Activated B cell treated with CpG ODN at 0.5 μM for 24 hours (primary cell): ENCODE measurements at regions of chr11 and their contacts with region 1.

Region 1: DNA sequence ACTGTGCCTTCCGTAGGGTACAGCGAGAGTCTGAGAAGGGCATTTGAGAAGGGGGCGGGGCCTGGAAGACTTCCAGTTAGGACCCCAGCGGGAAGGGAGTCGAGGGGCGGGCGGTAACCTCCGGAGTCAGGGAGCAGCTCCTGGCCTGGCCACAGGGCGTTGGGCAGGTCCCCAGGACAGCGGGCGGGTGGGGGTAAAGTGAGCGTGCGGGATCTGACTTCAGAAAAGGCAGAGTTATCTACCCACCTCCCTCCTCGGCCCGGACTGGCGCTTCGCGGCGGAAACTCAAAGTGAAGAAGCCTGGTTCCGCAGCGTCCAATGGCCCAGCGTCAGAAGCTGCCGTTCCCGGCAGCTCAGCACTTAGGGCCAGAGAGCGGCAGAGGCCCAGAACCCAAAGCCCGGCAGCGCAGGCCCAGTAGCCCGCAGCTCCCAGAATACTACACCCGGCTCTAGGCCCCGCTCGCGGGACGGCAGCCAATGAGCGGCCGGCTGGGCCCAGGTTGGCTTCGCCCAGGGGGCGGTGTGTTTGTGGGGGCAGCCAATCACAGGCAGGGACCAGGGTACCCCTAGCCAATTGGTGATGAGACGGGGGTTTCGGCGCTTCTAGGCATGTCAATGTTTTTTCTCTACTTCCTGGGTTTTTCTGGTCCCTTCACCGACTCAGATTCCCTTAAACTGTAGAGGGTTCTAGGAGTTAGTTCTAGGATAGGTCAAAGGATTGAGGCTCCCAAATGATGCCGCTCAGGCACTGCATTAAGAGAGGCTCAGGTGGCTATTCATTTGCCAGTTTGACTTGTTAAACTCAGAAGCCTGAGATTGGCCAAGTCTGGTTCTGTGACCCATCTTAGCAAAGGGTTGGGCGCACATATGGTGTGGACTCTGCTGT is at the start of gene TRIM68:
- DNase-seq: peak; percentile 87
- ATAC-seq: peak; percentile 100
- H3K4me3 Mint-ChIP-seq: peak within 1 kb of the TSS; percentile 95
- H3K27ac Mint-ChIP-seq: peak within 1 kb of the TSS; percentile 91
- H3K4me1 Mint-ChIP-seq: peaks cover 43% of the 10 kb centered on the region
- H3K27me3 Mint-ChIP-seq: no peaks in the 10 kb centered on the region
- CTCF ChIP-seq: no peak
- total RNA-seq, gene TRIM68: 15.2 and 16.9 TPM in 2 replicates

Region 2: GRCh38 chr11:4393209-4393857 is 214.7 kb before region 1 on chr11 and contains the start of gene TRIM21:
- CTCF ChIA-PET with region 1: no interaction called
- POLR2A ChIA-PET with region 1: no interaction called
- intact Hi-C with region 1: loop called (anchors 1 kb)
- DNase-seq: peak; percentile 74
- ATAC-seq: peak; percentile 99
- H3K4me3 Mint-ChIP-seq: peak within 1 kb of the TSS; percentile 95
- H3K27ac Mint-ChIP-seq: peak within 1 kb of the TSS; percentile 90
- H3K4me1 Mint-ChIP-seq: peaks cover 32% of the 10 kb centered on the region
- H3K27me3 Mint-ChIP-seq: peaks cover 8% of the 10 kb centered on the region
- CTCF ChIP-seq: no peak
- total RNA-seq, gene TRIM21: 27.7 and 30.8 TPM in 2 replicates

Region 3: GRCh38 chr11:4636962-4637661 is 29.1 kb after region 1 on chr11 and contains the start of gene OR51D1:
- CTCF ChIA-PET with region 1: interaction called, 14 read pairs
- POLR2A ChIA-PET with region 1: no interaction called
- intact Hi-C with region 1: no loop called
- DNase-seq: peak; percentile 39
- ATAC-seq: peak; percentile 84
- H3K4me3 Mint-ChIP-seq: no peak within 1 kb of the TSS
- H3K27ac Mint-ChIP-seq: no peak within 1 kb of the TSS
- H3K4me1 Mint-ChIP-seq: no peaks in the 10 kb centered on the region
- H3K27me3 Mint-ChIP-seq: peaks cover 4% of the 10 kb centered on the region
- CTCF ChIP-seq: peak; percentile 59
- total RNA-seq, gene OR51D1: not detected in 2 replicates

Region 4: GRCh38 chr11:4647766-4648165 is 39.7 kb after region 1 on chr11:
- CTCF ChIA-PET with region 1: no interaction called
- POLR2A ChIA-PET with region 1: no interaction called
- intact Hi-C with region 1: no loop called
- DNase-seq: no peak
- ATAC-seq: no peak
- H3K4me3 Mint-ChIP-seq: no peak overlapping the region
- H3K27ac Mint-ChIP-seq: no peak overlapping the region
- H3K4me1 Mint-ChIP-seq: no peaks in the 10 kb centered on the region
- H3K27me3 Mint-ChIP-seq: peaks cover 11% of the 10 kb centered on the region
- CTCF ChIP-seq: no peak

Region 5: GRCh38 chr11:4713241-4713640 is 105.2 kb after region 1 on chr11:
- CTCF ChIA-PET with region 1: no interaction called
- POLR2A ChIA-PET with region 1: no interaction called
- intact Hi-C with region 1: no loop called
- DNase-seq: no peak
- ATAC-seq: no peak
- H3K4me3 Mint-ChIP-seq: no peak overlapping the region
- H3K27ac Mint-ChIP-seq: no peak overlapping the region
- H3K4me1 Mint-ChIP-seq: no peaks in the 10 kb centered on the region
- H3K27me3 Mint-ChIP-seq: peaks cover 5% of the 10 kb centered on the region
- CTCF ChIP-seq: no peak

Region 6: DNA sequence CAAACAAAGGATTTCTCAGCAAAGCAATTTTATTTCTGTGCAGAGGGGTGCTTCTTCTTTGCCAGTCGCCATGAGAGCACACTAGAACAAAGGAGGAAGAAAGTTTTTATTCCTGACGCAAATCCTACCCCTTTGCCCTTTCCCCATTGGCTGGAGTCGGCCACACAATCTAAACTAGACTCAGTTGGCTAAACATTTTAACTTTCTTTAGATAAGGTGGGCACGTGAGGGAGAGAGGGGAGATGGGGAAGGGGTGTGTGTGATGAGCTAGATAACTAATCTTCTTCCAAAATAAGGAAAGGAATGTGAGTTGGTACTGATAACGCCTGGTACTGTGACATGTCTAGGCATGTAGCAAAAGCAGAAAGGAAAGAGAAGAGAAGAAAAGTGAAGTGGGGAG is 1082.2 kb after region 1 on chr11:
- CTCF ChIA-PET with region 1: no interaction called
- POLR2A ChIA-PET with region 1: no interaction called
- intact Hi-C with region 1: loop called (anchors 10 kb)
- DNase-seq: no peak
- ATAC-seq: no peak
- H3K4me3 Mint-ChIP-seq: peak overlapping the region; percentile 96
- H3K27ac Mint-ChIP-seq: peak overlapping the region; percentile 94
- H3K4me1 Mint-ChIP-seq: peaks cover 62% of the 10 kb centered on the region
- H3K27me3 Mint-ChIP-seq: no peaks in the 10 kb centered on the region
- CTCF ChIP-seq: no peak

Region 7: DNA sequence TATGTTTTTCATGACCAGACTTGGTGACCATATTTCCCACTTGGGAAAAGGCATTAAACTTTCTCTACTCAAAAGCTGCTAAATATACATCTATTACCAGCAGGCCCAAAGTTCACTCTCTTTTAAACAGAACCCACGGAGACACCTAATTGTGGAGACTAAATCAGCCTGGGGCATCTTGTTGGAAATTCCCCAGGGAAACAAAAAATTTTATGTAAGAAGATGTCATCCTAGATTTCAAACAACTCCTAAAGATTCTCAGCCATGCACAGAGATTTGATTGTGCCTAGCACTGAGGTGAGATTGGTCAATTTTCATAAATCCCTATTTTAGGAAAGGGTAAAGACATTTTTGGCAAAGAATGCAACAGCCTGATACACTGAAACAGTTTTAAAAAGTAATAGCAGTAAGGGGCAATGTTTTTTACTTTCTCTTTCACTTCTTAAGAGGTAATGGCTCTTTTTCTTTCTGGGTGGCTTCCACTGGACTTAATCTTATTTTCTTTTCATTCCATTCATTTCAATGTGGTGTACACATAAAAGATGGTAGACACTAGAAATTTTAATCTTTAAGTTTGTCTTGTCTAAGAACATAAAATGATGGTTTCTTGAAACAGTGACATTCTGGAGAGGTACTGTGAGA is 1210.3 kb after region 1 on chr11:
- CTCF ChIA-PET with region 1: no interaction called
- POLR2A ChIA-PET with region 1: no interaction called
- intact Hi-C with region 1: loop called (anchors 10 kb)
- DNase-seq: no peak
- ATAC-seq: peak; percentile 25
- H3K4me3 Mint-ChIP-seq: peak overlapping the region; percentile 73
- H3K27ac Mint-ChIP-seq: peak overlapping the region; percentile 64
- H3K4me1 Mint-ChIP-seq: peaks cover 25% of the 10 kb centered on the region
- H3K27me3 Mint-ChIP-seq: no peaks in the 10 kb centered on the region
- CTCF ChIP-seq: no peak

Region 8: GRCh38 chr11:6096427-6096826 is 1488.4 kb after region 1 on chr11:
- CTCF ChIA-PET with region 1: no interaction called
- POLR2A ChIA-PET with region 1: no interaction called
- intact Hi-C with region 1: no loop called
- DNase-seq: no peak
- ATAC-seq: no peak
- H3K4me3 Mint-ChIP-seq: no peak overlapping the region
- H3K27ac Mint-ChIP-seq: no peak overlapping the region
- H3K4me1 Mint-ChIP-seq: no peaks in the 10 kb centered on the region
- H3K27me3 Mint-ChIP-seq: peaks cover 7% of the 10 kb centered on the region
- CTCF ChIP-seq: no peak

Region 9: DNA sequence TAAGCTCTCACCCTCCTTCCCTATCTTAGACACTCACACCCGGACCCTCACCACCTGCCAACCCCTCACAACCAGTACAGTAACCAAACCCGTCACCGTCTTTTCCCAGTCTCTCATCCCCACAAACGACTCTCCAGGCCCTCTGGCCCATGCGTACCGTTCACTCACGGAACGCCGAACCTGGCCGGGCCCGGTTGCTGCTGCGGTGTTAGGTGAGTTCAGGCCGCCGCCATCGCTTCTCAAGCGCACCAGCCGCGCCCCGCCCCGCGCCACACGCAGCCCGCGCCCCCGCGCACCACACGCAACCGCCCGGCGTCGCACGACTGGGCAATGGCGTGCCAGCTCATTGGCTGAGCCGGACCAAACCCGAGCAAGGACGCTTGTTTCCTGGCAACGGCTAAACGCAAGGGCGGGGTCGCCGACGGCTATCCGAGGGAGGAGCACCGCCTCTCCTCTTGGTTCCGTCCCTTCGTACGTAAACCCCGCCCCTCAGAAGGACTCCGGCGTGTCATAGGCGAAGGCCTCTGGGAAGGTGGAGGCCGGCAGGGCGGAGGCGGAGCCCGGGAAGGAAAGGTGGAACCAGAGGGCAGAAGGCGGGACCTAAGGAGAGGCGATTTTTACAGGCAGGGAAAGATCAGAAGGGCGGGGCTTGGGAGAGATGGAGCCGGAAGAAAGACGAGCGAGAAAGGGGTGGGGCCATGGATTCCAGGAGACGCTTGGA is 1626.5 kb after region 1 on chr11 and contains the start of gene FHIP1B:
- CTCF ChIA-PET with region 1: no interaction called
- POLR2A ChIA-PET with region 1: no interaction called
- intact Hi-C with region 1: loop called (anchors 2 kb)
- DNase-seq: peak; percentile 95
- ATAC-seq: peak; percentile 93
- H3K4me3 Mint-ChIP-seq: peak within 1 kb of the TSS; percentile 99
- H3K27ac Mint-ChIP-seq: peak within 1 kb of the TSS; percentile 92
- H3K4me1 Mint-ChIP-seq: peaks cover 32% of the 10 kb centered on the region
- H3K27me3 Mint-ChIP-seq: peaks cover 3% of the 10 kb centered on the region
- CTCF ChIP-seq: no peak
- total RNA-seq, gene FHIP1B: 27.7 and 32.8 TPM in 2 replicates